Posterior vena cava (tissue), 2 donors: ENCODE measurements at regions of chr14 and their contacts with region 1.

Region 1: DNA sequence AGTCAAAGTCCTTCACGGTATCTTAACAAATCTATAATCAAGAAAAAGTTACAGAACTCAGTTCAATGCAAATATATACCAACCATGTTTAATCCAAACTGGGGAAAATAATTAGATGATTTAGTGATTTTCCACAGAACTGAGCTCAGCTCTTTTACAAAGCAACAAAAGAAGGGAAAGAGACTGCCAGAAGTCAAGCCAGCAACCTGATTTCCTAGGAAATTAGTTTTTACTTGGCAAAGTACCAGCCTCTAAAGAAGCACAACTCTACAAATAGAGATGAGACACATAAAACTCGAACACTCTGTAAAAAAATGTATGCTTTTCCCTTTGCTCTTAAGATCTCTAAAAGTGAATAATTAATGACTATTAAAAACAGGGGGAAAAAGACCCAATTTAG is 19.4 kb downstream of the NUMB start:
- DNase-seq: no peak

Region 2: DNA sequence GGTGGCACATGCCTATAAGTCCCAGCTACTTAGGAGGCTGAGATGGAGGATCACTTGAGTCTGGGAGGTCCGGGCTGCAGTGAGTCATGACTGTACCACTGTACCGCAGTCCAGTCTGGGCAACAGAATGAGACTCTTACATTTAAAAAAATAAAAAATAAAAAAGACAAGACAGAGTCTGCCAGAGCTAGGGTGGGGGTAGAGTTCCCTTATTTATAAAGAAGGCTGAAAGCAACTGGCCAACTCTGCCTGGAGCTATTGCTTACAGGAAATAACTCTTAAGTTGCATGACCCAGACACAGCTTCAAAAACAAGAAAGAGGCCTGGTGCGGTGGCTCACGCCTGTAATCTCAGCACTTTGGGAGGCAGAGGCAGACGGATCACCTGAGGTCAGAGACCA is 12.1 kb before region 1 on chr14:
- intact Hi-C with region 1: loop called in 1 of 2 experiments (anchors 1 kb)
- DNase-seq: no peak